ENCODE measurements at regions of chr18 and their contacts with region 1.

Region 1: DNA sequence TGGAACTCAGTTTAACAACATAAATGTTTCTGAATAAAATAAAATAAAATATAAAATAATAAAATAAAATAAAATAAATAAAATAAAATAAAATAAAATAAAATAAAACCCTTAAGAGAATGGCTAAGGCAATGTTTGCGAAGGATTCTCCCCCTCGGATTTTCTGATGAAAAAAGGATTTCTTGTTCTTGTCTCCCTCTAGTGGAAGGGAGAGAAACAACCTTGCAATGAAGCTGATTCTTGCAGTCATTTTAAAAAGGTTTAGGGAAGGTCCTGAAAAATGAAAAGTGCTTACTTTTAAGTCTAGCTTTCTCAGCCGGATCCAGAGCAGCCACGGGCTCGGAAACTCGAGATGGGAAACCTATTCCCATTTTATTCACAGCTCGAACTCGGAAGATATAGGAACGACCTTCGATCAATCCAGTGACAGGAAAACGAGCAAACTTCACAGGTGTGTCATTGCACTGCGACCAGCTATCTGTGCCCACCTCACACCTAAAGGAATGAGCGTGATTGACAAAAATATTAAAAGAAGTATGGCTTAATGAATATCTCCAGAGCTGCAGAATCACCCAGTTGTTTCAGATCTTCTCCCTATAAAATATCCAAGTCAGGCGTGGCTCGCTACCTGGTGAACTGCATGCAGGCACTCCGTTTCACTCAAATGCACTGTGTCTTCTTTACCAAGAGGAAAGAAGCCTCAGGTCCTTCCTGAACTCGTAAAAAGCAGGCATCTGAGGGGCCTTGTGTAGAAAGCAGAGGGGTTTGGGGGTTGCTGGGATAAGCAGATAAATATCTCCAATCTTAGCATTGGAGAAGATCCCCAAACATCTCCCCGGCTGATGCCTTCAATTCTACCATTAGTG is 68.1 kb downstream of the MYOM1 start:
- DNase-seq: peak; percentile 49 to 79 (median 76)
- H3K4me3 ChIP-seq: no peak overlapping the region
- H3K27ac ChIP-seq: no peak overlapping the region
- H3K4me1 ChIP-seq: no peaks in the 10 kb centered on the region
- H3K27me3 ChIP-seq: no peaks in the 10 kb centered on the region

Region 2: DNA sequence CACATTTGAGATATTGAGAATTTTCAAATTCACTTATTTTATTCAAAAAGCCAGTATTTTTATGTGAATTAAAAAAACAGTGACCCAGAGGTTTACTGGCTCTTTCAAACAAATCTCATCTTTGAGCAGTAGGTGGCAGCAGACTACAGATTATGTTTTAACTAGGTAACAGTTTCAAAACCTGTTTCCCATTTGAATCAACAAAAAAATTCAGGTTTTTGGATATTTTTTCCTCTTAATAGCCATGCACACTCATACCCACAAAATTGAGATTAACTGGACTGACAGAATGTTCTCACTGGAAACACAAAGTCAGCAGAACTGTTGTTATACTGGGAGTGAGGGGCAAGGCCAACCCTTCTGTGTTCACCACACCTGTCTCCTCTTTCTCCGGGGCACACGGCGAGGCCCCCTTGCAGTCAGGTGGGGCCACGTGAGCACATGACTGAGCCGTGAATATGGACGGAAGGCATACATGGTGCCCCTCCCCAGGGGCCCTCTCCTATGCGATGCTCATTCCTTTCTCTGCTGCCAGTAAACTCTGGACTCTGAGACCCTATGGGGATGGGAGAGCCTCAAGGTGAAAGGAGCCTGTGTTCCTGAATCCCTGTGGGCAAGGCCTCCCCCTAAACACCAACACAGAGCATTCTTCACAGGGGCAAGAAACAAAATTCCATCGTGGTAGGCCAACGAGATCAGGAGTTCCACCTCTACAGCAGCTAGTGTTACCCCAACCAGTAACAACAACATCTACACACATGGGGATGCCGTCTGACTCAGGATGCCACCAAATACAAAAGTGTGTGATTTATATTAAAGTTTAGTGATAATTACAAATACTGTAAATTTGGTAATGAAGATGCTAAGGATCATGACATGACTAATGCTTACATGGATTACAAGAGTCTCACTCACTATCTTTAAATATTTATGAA is 219.1 kb before region 1 on chr18:
- CTCF ChIA-PET with region 1: interaction called, 13 read pairs
- POLR2A ChIA-PET with region 1: no interaction called
- DNase-seq: peak; percentile 68 to 88 (median 79)
- H3K4me3 ChIP-seq: no peak overlapping the region
- H3K27ac ChIP-seq: no peak overlapping the region
- H3K4me1 ChIP-seq: peaks cover 0 to 7% (median 0%) of the 10 kb centered on the region in 4 experiments
- H3K27me3 ChIP-seq: no peaks in the 10 kb centered on the region

Region 3: DNA sequence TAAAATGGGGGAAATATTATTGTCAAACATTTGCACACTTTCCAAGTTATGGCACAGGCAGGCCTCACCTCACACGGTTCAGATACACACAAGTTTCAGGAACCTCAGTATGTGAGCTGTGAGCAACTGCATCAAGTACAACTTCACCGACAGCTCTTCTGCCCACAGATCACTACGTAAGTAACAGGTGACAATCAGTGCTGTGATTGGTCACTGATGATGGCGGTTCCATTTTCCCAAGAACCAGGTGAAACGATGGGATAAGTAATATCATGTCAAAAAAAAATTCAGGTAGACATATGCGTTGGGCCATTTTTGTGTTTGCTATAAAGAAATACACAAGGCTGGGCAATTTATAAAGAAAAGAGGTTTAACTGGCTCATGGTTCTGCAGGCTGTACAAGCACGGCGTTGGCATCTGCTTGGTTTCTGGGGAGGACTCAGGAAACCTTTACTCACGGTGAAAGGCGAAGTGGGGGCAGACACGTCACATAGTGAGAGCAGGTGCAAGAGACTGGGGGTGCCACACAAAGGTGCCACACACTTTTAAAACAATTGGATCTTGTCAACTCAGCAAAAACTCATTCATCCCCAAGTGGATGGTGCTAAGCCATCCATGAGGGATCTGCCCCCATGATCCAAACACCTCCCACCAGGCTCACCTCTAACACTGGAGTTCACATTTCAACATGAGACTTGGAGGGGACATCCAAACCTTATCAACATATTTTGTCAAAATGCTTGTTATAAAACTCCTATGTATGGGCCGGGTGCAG is 196.6 kb before region 1 on chr18:
- CTCF ChIA-PET with region 1: no interaction called
- POLR2A ChIA-PET with region 1: no interaction called
- DNase-seq: no peak
- H3K4me3 ChIP-seq: no peak overlapping the region
- H3K27ac ChIP-seq: no peak overlapping the region
- H3K4me1 ChIP-seq: peaks cover 15 to 24% (median 18%) of the 10 kb centered on the region in 4 experiments
- H3K27me3 ChIP-seq: no peaks in the 10 kb centered on the region

Region 4: GRCh38 chr18:3162181-3162580 is 10.5 kb after region 1 on chr18:
- CTCF ChIA-PET with region 1: interaction called, 15 read pairs
- POLR2A ChIA-PET with region 1: no interaction called
- DNase-seq: no peak
- H3K4me3 ChIP-seq: no peak overlapping the region
- H3K27ac ChIP-seq: no peak overlapping the region
- H3K4me1 ChIP-seq: no peaks in the 10 kb centered on the region
- H3K27me3 ChIP-seq: no peaks in the 10 kb centered on the region

Measured in common myeloid progenitor, CD34-positive (primary cell).